B cell (primary cell): ENCODE measurements at regions of chr11 and their contacts with region 1.

Region 1: DNA sequence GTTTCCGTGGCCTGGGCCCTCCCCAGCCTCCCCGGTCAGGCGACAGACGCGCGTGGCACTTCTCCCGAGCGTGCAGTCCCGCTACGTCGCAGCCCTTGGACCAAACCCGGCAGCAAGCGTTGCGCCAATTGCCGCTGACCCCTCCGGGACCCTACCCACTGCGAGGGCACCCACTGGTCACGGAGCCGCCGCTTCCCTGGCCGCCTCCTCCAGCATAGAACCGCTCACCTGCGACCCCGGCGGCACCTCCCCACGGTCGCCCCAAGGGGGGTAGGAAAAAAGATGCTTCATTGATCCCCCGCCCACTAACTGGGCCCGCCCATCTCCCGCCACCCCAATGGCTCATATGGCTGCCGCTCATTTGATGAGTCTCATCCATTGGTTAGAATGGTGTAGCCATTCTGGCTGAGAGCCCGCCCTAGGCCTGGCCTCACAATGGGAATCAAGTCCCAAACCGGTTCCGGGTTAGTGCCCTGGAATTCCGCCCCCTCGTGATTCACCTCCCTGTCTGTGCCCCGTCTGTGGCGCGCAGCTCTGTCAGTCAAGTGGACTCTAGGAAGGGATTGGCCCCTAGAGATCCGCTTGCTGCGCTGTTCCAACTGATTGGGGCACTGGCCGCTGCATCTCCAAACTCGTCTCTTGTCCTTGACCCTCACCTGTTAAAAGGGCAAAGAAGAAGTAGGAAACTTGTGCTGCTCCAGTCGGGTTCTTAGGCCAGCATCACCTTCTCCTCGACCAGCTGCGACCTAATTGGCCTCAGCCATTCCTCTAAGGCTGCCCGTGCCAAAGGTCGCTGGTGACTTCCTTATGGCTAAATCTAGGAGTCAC is at the start of gene MSANTD4:
- DNase-seq: peak; percentile 96
- ATAC-seq: peak; percentile 96
- H3K4me3 ChIP-seq: peak within 1 kb of the TSS; percentile 66 to 96 (median 82)
- H3K4me3 Mint-ChIP-seq: peak within 1 kb of the TSS; percentile 91
- H3K27ac ChIP-seq: peak within 1 kb of the TSS; percentile 71 to 83
- H3K27ac Mint-ChIP-seq: peak within 1 kb of the TSS; percentile 86
- H3K4me1 ChIP-seq: peaks cover 11 to 17% of the 10 kb centered on the region in 2 donors
- H3K4me1 Mint-ChIP-seq: peaks cover 42% of the 10 kb centered on the region
- H3K27me3 ChIP-seq: no peaks in the 10 kb centered on the region
- H3K27me3 Mint-ChIP-seq: no peaks in the 10 kb centered on the region
- CTCF ChIP-seq: peak; percentile 10
- total RNA-seq, gene MSANTD4: 20.0 and 20.8 TPM in 2 replicates

Region 2: GRCh38 chr11:104705490-104706190 is 1316.5 kb before region 1 on chr11:
- CTCF ChIA-PET with region 1: no interaction called
- POLR2A ChIA-PET with region 1: no interaction called
- intact Hi-C with region 1: loop called (anchors 5 kb)
- DNase-seq: peak; percentile 69
- ATAC-seq: peak; percentile 91
- H3K4me3 ChIP-seq: peak overlapping the region; percentile 20 to 57 (median 51)
- H3K4me3 Mint-ChIP-seq: peak overlapping the region; percentile 80
- H3K27ac ChIP-seq: peak overlapping the region; percentile 46 to 87
- H3K27ac Mint-ChIP-seq: peak overlapping the region; percentile 91
- H3K4me1 ChIP-seq: peaks cover 21 to 23% of the 10 kb centered on the region in 2 donors
- H3K4me1 Mint-ChIP-seq: peaks cover 22% of the 10 kb centered on the region
- H3K27me3 ChIP-seq: no peaks in the 10 kb centered on the region
- H3K27me3 Mint-ChIP-seq: no peaks in the 10 kb centered on the region
- CTCF ChIP-seq: no peak

Region 3: DNA sequence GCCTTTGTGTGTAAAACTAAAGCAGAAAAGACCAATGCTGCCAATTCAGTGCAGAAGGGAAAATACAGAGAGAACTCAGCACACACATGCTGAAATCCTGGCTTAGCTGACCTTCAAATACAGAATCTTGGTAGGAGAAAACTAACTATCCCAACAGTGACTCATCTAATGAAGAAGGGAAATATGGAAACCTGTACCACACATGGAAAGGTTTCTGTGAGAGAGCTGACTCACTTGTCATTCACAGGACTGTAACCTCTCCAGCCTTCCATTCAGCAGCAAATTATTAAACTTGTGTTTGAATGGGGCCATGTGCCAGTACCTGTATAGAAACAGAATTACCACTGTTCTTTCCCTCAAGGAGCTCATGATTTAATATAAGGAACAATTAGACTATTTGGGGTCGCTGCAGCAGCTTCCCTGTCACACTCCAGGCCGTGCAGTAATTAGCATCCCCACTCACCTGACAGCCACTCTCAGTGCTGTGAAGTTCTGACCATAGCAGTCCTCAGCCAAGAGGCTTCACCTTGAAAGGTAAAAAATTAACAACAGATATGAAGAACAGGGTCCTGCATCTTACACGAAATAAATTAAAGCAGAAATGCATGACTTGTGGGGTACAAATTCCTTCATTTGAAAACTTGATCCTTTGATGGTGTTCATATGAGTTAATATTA is 54.0 kb before region 1 on chr11:
- CTCF ChIA-PET with region 1: no interaction called
- POLR2A ChIA-PET with region 1: no interaction called
- intact Hi-C with region 1: no loop called
- DNase-seq: no peak
- ATAC-seq: no peak
- H3K4me3 ChIP-seq: no peak overlapping the region
- H3K4me3 Mint-ChIP-seq: no peak overlapping the region
- H3K27ac ChIP-seq: no peak overlapping the region
- H3K27ac Mint-ChIP-seq: no peak overlapping the region
- H3K4me1 ChIP-seq: no peaks in the 10 kb centered on the region
- H3K4me1 Mint-ChIP-seq: no peaks in the 10 kb centered on the region
- H3K27me3 ChIP-seq: no peaks in the 10 kb centered on the region
- H3K27me3 Mint-ChIP-seq: peaks cover 7% of the 10 kb centered on the region
- CTCF ChIP-seq: no peak

Region 4: DNA sequence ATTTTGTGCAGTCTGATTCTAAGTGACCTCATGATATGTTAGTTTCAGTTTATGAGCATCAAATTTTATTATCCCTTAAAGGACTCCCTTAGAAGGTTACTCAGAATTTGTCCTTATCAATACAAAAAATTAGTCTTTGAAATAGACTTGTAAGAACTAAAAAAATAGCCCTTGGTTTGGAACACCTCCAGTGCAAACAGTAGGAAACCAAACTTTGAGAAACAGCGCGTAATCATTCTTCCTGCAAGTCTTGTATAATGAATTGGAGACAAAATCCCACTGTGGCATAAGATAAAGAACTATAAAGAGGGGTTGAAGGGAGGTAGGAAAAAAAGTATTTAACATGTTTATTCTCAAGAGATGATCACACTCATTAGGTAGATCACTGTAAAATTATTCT is 10.7 kb after region 1 on chr11:
- CTCF ChIA-PET with region 1: no interaction called
- POLR2A ChIA-PET with region 1: no interaction called
- intact Hi-C with region 1: no loop called
- DNase-seq: no peak
- ATAC-seq: no peak
- H3K4me3 ChIP-seq: no peak overlapping the region
- H3K4me3 Mint-ChIP-seq: no peak overlapping the region
- H3K27ac ChIP-seq: no peak overlapping the region
- H3K27ac Mint-ChIP-seq: no peak overlapping the region
- H3K4me1 ChIP-seq: no peaks in the 10 kb centered on the region
- H3K4me1 Mint-ChIP-seq: no peaks in the 10 kb centered on the region
- H3K27me3 ChIP-seq: peaks cover 0 to 28% (median 5%) of the 10 kb centered on the region in 4 experiments
- H3K27me3 Mint-ChIP-seq: peaks cover 53% of the 10 kb centered on the region
- CTCF ChIP-seq: no peak

Region 5: GRCh38 chr11:106076919-106077608 is 54.9 kb after region 1 on chr11 and contains the start of gene KBTBD3:
- CTCF ChIA-PET with region 1: interaction called, 10 read pairs
- POLR2A ChIA-PET with region 1: no interaction called
- intact Hi-C with region 1: loop called (anchors 1 kb)
- DNase-seq: peak; percentile 99
- ATAC-seq: peak; percentile 91
- H3K4me3 ChIP-seq: peak within 1 kb of the TSS; percentile 72 to 96 (median 77)
- H3K4me3 Mint-ChIP-seq: peak within 1 kb of the TSS; percentile 100
- H3K27ac ChIP-seq: peak within 1 kb of the TSS; percentile 92 to 93
- H3K27ac Mint-ChIP-seq: peak within 1 kb of the TSS; percentile 99
- H3K4me1 ChIP-seq: peaks cover 12 to 23% of the 10 kb centered on the region in 2 donors
- H3K4me1 Mint-ChIP-seq: peaks cover 48% of the 10 kb centered on the region
- H3K27me3 ChIP-seq: no peaks in the 10 kb centered on the region
- H3K27me3 Mint-ChIP-seq: no peaks in the 10 kb centered on the region
- CTCF ChIP-seq: peak; percentile 73
- total RNA-seq, gene KBTBD3: 15.5 and 18.3 TPM in 2 replicates